ENCODE measurements at regions of chr2 and their contacts with region 1.

Region 1: GRCh38 chr2:223613017-223613950 is 11.1 kb upstream of the SCG2 start:
- DNase-seq: peak; percentile 95
- H3K4me3 ChIP-seq: peak overlapping the region; percentile 16 to 39 (median 25)
- H3K27ac ChIP-seq: peak overlapping the region; percentile 65 to 84 (median 78)
- H3K4me1 ChIP-seq: peaks cover 0 to 15% (median 9%) of the 10 kb centered on the region in 4 donors
- H3K27me3 ChIP-seq: no peaks in the 10 kb centered on the region
- CTCF ChIP-seq: no peak
- EP300 ChIP-seq: no peak
- POLR2A ChIP-seq: no peak

Region 2: GRCh38 chr2:223108351-223109050 is 504.8 kb before region 1 on chr2:
- intact Hi-C with region 1: loop called (anchors 5 kb)
- DNase-seq: no peak
- H3K4me3 ChIP-seq: no peak overlapping the region
- H3K27ac ChIP-seq: no peak overlapping the region
- H3K4me1 ChIP-seq: peaks cover 0 to 3% (median 0%) of the 10 kb centered on the region in 4 donors
- H3K27me3 ChIP-seq: no peaks in the 10 kb centered on the region
- CTCF ChIP-seq: no peak
- EP300 ChIP-seq: no peak
- POLR2A ChIP-seq: no peak

Region 3: DNA sequence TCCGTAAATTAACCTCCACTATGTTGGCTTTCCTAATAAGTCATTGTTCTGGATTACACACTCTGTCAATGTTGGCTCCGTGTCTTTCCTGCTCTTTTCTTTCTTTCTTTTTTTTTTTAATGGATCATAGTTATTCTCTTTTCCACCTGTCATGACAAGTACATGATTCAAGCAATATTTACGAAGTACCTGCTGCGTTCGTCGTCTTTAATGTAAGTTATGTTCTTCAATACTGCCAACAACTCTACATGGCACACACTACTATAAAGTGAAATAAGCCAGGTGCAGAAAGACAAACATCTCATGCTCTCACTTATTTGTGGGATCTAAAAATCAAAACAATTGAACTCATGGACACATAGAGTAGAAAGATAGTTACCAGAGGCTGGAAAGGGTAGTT is 250.2 kb before region 1 on chr2:
- intact Hi-C with region 1: loop called (anchors 2 kb)
- DNase-seq: no peak
- H3K4me3 ChIP-seq: no peak overlapping the region
- H3K27ac ChIP-seq: peak overlapping the region in 2 of 4 donors; percentile 44 to 48
- H3K4me1 ChIP-seq: peaks cover 0 to 24% (median 13%) of the 10 kb centered on the region in 4 donors
- H3K27me3 ChIP-seq: no peaks in the 10 kb centered on the region
- CTCF ChIP-seq: no peak
- EP300 ChIP-seq: peak; percentile 13 to 74 (median 34)
- POLR2A ChIP-seq: no peak

Region 4: GRCh38 chr2:223590964-223591363 is 22.3 kb before region 1 on chr2:
- intact Hi-C with region 1: no loop called
- DNase-seq: no peak
- H3K4me3 ChIP-seq: no peak overlapping the region
- H3K27ac ChIP-seq: no peak overlapping the region
- H3K4me1 ChIP-seq: peaks cover 0 to 10% (median 5%) of the 10 kb centered on the region in 4 donors
- H3K27me3 ChIP-seq: no peaks in the 10 kb centered on the region
- CTCF ChIP-seq: no peak
- EP300 ChIP-seq: no peak
- POLR2A ChIP-seq: no peak

Region 5: GRCh38 chr2:223654384-223654915 is 41.2 kb after region 1 on chr2:
- intact Hi-C with region 1: no loop called
- DNase-seq: no peak
- H3K4me3 ChIP-seq: no peak overlapping the region
- H3K27ac ChIP-seq: no peak overlapping the region
- H3K4me1 ChIP-seq: no peaks in the 10 kb centered on the region
- H3K27me3 ChIP-seq: no peaks in the 10 kb centered on the region
- CTCF ChIP-seq: no peak
- EP300 ChIP-seq: no peak
- POLR2A ChIP-seq: no peak

Measured in sigmoid colon (tissue), 7 donors.